H1 (cell line): ENCODE measurements at regions of chr19 and their contacts with region 1.

Region 1: DNA sequence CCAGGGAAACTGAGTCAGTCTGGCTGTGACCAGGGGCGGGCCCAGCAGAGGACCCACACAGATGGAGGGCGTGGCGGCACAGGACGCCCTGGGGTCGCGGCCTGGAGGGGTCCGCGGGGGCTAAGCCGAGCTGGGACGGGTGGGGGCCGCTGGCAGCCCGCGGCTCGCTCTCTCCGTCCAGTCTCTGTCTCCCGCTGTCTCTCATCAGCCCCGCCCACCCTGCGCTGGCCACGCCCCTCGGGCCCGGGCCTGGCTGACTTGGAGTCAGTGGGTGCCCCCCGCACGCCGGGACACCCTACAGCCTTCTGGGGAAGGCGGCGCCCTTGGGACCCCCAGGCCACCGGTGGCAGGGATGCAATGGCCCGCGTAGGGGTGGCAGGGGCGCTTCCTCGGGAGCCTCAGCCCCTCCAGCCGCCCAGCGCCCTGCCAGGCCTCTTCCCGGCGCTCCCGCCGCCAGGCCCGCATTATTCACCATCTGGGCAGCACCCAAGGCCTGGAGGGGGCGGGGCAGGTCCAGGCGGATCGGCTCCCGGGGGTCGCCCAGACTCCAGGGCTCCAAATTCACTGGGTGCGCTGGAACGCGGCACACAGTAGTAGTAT is at the start of gene TBXA2R:
- DNase-seq: peak in 1 of 2 experiments; percentile 93
- H3K4me3 ChIP-seq: peak within 1 kb of the TSS; percentile 15 to 64 (median 36)
- H3K27ac ChIP-seq: no peak within 1 kb of the TSS
- H3K4me1 ChIP-seq: peaks cover 3 to 14% (median 12%) of the 10 kb centered on the region in 4 experiments
- H3K27me3 ChIP-seq: peaks cover 0 to 16% (median 13%) of the 10 kb centered on the region in 4 experiments; a peak in 5 of 7 replicates
- CTCF ChIP-seq: 0 out of 4 replicates have a peak, but pooled peaks of 1 of the 3 experiments have one; percentile 1
- EP300 ChIP-seq: no peak
- POLR2A ChIP-seq: no peak
- RAD21 ChIP-seq: no peak
- total RNA-seq, gene TBXA2R: 0.50 and 0.75 TPM in 2 replicates

Region 2: GRCh38 chr19:3520166-3521103 is 86.4 kb before region 1 on chr19:
- CTCF ChIA-PET with region 1: no interaction called
- POLR2A ChIA-PET with region 1: no interaction called
- DNase-seq: no peak
- H3K4me3 ChIP-seq: no peak overlapping the region
- H3K27ac ChIP-seq: no peak overlapping the region
- H3K4me1 ChIP-seq: peaks cover 0 to 29% (median 20%) of the 10 kb centered on the region in 4 experiments; a peak in 6 of 7 replicates
- H3K27me3 ChIP-seq: no peaks in the 10 kb centered on the region
- CTCF ChIP-seq: peak; percentile 33 to 42 (median 41)
- EP300 ChIP-seq: no peak
- POLR2A ChIP-seq: no peak
- RAD21 ChIP-seq: peak; percentile 25 to 42; a peak in 3 of 4 replicates

Region 3: GRCh38 chr19:3618144-3618810 is 11.5 kb after region 1 on chr19:
- CTCF ChIA-PET with region 1: interaction called, 23 read pairs
- POLR2A ChIA-PET with region 1: interaction called, 6 read pairs
- DNase-seq: peak in 1 of 2 experiments; percentile 96
- H3K4me3 ChIP-seq: no peak overlapping the region
- H3K27ac ChIP-seq: no peak overlapping the region
- H3K4me1 ChIP-seq: peaks cover 0 to 3% (median under 1%) of the 10 kb centered on the region in 4 experiments; a peak in 3 of 7 replicates
- H3K27me3 ChIP-seq: no peaks in the 10 kb centered on the region
- CTCF ChIP-seq: peak; percentile 86 to 92 (median 86)
- EP300 ChIP-seq: no peak
- POLR2A ChIP-seq: no peak
- RAD21 ChIP-seq: peak; percentile 68 to 80

Region 4: GRCh38 chr19:3638208-3639193 is 31.7 kb after region 1 on chr19:
- CTCF ChIA-PET with region 1: no interaction called
- POLR2A ChIA-PET with region 1: no interaction called
- DNase-seq: no peak
- H3K4me3 ChIP-seq: no peak overlapping the region
- H3K27ac ChIP-seq: no peak overlapping the region
- H3K4me1 ChIP-seq: no peaks in the 10 kb centered on the region
- H3K27me3 ChIP-seq: no peaks in the 10 kb centered on the region
- CTCF ChIP-seq: no peak
- EP300 ChIP-seq: no peak
- POLR2A ChIP-seq: no peak
- RAD21 ChIP-seq: no peak

Region 5: GRCh38 chr19:3694360-3695123 is 87.8 kb after region 1 on chr19:
- CTCF ChIA-PET with region 1: no interaction called
- POLR2A ChIA-PET with region 1: no interaction called
- DNase-seq: no peak
- H3K4me3 ChIP-seq: no peak overlapping the region
- H3K27ac ChIP-seq: no peak overlapping the region
- H3K4me1 ChIP-seq: peaks cover 0 to 5% (median 0%) of the 10 kb centered on the region in 4 experiments; a peak in 2 of 7 replicates
- H3K27me3 ChIP-seq: no peaks in the 10 kb centered on the region; a peak in 2 of 7 replicates
- CTCF ChIP-seq: no peak
- EP300 ChIP-seq: no peak
- POLR2A ChIP-seq: no peak
- RAD21 ChIP-seq: no peak